T-cell (primary cell): ENCODE measurements at regions of chr15 and their contacts with region 1.

Region 1: GRCh38 chr15:90441027-90441426 is 53.0 kb downstream of the IQGAP1 start:
- DNase-seq: no peak
- ATAC-seq: no peak
- H3K4me3 ChIP-seq: no peak overlapping the region
- H3K4me3 Mint-ChIP-seq: no peak overlapping the region
- H3K27ac ChIP-seq: no peak overlapping the region
- H3K27ac Mint-ChIP-seq: no peak overlapping the region
- H3K4me1 ChIP-seq: no peaks in the 10 kb centered on the region
- H3K4me1 Mint-ChIP-seq: peaks cover 18 to 26% (median 19%) of the 10 kb centered on the region in 3 donors
- H3K27me3 ChIP-seq: no peaks in the 10 kb centered on the region
- H3K27me3 Mint-ChIP-seq: no peaks in the 10 kb centered on the region

Region 2: GRCh38 chr15:90497912-90498311 is 56.9 kb after region 1 on chr15:
- CTCF ChIA-PET with region 1: interaction called in 1 of 2 experiments, 6 read pairs
- POLR2A ChIA-PET with region 1: interaction called in 1 of 2 experiments, 14 read pairs
- DNase-seq: no peak
- ATAC-seq: no peak
- H3K4me3 ChIP-seq: no peak overlapping the region
- H3K4me3 Mint-ChIP-seq: no peak overlapping the region
- H3K27ac ChIP-seq: no peak overlapping the region
- H3K27ac Mint-ChIP-seq: peak overlapping the region in 1 of 2 donors; percentile 37
- H3K4me1 ChIP-seq: peaks cover 0 to 2% of the 10 kb centered on the region in 2 experiments
- H3K4me1 Mint-ChIP-seq: peaks cover 11 to 14% (median 13%) of the 10 kb centered on the region in 3 donors
- H3K27me3 ChIP-seq: no peaks in the 10 kb centered on the region
- H3K27me3 Mint-ChIP-seq: no peaks in the 10 kb centered on the region